Activated naive CD4-positive, alpha-beta T cell treated with anti-CD3 and anti-CD28 coated beads for 36 hours (primary cell): ENCODE measurements at regions of chr2 and their contacts with region 1.

Region 1: DNA sequence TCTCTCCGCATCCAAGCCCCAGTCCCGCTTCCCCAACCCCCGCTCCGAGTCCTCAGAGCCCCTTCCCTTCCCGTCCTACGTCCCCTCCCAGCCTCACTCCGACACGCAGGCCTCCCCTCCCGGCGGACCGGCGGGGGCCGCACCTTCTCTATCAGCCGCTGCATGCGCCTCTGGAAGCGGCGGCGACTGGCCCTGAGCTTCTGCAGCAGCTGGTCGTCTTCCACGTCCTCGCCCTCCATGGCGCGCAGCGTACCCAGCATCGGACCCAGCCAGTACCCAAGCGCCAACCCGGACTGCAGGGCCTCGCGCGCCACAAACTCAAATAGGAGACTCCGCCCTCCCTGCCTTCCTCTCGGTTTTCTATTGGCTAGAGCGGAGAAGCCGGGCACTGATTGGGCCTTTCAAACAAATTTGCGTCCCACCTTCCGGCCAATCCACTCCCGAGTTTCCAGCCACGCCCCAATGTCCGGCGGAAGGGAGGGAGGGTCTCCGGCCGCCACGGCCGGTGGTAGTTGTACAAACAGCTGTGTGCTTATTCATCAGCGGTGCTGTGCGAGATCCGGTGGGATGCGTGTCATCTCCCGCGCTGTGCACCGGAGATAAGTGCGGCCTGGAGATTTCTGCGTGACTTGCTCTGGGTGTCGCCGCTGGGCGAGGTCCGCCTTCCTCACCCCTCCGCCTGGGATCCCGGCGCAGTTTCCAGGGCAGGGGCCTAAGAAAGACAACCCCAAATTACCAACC is at the start of gene HJURP:
- DNase-seq: peak; percentile 98
- H3K4me3 Mint-ChIP-seq: peak within 1 kb of the TSS; percentile 93
- H3K27ac Mint-ChIP-seq: peak within 1 kb of the TSS; percentile 95
- H3K4me1 Mint-ChIP-seq: peaks cover 17% of the 10 kb centered on the region
- H3K27me3 Mint-ChIP-seq: peaks cover 7% of the 10 kb centered on the region
- total RNA-seq, gene HJURP: 127 to 129 TPM

Region 2: DNA sequence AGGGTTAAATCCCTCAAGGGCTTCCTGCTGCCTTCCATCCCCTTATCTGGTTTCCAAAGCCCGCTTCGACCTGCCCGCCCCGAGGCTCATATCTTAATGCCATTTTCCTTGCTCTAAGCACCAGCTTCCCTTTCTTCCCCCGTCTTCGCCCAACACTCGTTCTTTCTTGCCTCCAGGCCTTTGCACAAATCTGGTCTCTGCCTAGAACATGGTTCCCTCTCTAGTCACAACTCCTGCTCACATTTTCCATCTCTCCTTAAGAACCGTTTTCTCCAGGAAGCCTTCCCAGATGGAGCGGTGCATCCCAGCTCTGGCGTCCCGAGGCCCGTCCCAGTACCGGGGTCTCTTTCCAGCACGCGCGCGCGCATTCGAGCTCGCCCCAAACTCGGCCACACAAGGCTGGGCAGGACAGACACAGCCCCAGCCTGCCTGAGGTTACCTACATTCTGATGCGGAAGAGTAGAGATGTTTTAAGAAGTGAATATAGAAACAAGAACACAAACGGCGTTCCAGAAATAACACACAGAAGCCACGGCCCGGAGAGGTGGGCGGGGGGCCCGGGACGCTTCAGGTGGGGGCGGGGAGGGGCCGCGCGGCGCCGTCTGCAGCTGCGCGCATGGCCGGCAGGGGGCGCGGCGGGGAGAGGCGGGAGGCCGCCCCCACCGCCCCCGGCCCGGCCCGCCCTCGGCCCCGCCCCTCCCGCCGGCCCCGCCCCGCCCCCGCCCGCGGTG is 500.5 kb before region 1 on chr2 and contains the start of gene DGKD:
- CTCF ChIA-PET with region 1: no interaction called
- intact Hi-C with region 1: loop called (anchors 10 kb)
- DNase-seq: peak; percentile 71
- H3K4me3 Mint-ChIP-seq: peak within 1 kb of the TSS; percentile 87
- H3K27ac Mint-ChIP-seq: peak within 1 kb of the TSS; percentile 70
- H3K4me1 Mint-ChIP-seq: peaks cover 63% of the 10 kb centered on the region
- H3K27me3 Mint-ChIP-seq: no peaks in the 10 kb centered on the region
- total RNA-seq, gene DGKD: 68.9 to 72.3 TPM

Region 3: GRCh38 chr2:233418761-233419625 is 435.4 kb before region 1 on chr2:
- CTCF ChIA-PET with region 1: no interaction called
- intact Hi-C with region 1: loop called (anchors 5 kb)
- DNase-seq: peak; percentile 67
- H3K4me3 Mint-ChIP-seq: peak overlapping the region; percentile 67
- H3K27ac Mint-ChIP-seq: peak overlapping the region; percentile 88
- H3K4me1 Mint-ChIP-seq: peaks cover 97% of the 10 kb centered on the region
- H3K27me3 Mint-ChIP-seq: no peaks in the 10 kb centered on the region

Region 4: DNA sequence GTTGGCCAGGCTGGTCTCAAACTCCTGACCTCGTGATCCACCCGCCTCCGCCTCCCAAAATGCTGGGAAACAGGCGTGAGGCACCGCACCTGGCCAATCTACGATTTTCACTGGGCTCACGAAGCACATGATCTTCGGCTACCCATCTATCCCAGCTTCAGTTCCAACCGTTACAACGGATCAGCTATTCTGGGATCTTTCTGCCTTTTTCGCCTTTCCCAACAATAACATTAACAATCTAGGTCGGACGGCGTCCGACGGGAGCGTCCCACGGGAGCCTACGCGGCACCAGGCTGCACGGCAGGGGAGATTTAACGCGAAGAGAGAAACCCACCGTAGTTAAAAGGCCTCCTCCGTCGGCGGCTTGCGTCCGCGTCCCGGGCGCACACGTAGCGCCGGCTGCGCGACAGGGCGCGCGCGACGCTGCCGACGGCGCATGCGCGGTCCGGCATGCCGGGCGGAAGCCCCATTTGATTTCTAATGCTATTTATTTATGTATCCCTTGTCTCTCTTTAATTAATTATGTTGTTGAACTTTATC is 13.7 kb after region 1 on chr2 and contains the start of gene MSL3B:
- CTCF ChIA-PET with region 1: interaction called, 15 read pairs
- intact Hi-C with region 1: loop called (anchors 1 kb)
- DNase-seq: peak; percentile 52
- H3K4me3 Mint-ChIP-seq: peak within 1 kb of the TSS; percentile 84
- H3K27ac Mint-ChIP-seq: peak within 1 kb of the TSS; percentile 83
- H3K4me1 Mint-ChIP-seq: peaks cover 3% of the 10 kb centered on the region
- H3K27me3 Mint-ChIP-seq: peaks cover 16% of the 10 kb centered on the region